Cardiac septum (tissue), 1 donor: ENCODE measurements at regions of chr18 and their contacts with region 1.

Region 1: GRCh38 chr18:59459369-59460079 is 100.5 kb upstream of the LMAN1 start:
- DNase-seq: no peak

Region 2: GRCh38 chr18:59249205-59249774 is 210.2 kb before region 1 on chr18:
- intact Hi-C with region 1: no loop called
- DNase-seq: no peak

Region 3: GRCh38 chr18:59555995-59556659 is 96.6 kb after region 1 on chr18:
- intact Hi-C with region 1: no loop called
- DNase-seq: no peak

Region 4: DNA sequence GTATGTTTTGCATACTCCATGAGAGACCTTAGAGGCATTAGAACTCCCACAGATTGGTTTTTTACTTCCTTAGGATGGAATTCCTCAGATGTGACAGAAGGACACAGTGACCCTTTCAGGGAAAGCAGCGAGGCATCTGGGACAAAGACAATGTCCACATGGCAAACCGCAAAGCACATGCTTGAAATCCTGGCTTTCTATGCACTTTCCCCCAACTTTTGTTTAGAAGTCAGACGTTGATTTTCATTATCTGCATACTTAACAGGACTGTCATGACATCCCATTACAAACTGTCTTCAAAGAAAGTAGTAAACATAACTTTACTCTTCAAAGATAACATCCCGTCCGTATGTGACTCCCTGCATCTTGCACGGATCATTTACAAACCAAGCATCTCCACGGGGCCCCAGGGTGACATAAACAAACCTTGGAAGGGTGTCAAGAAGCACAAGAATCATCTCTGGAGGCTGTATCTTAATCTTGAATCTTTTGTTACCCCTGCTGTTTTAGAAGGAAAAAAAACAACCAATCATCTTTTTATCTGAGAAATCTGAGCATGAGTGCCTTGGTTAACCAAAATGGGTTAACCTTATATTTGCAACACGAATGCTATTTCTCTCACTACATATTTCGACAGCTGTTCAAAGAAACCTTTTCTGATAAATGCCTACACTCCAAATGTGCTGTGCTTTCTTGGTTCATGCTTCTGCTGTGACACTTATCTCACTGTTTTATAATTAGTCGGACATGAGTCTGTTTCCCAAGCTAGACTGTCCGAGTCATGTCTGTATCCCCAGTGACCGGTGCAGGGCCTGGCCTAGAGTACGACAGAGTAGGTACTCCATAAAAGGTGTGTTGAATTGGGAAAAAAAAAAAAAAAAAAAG is 146.9 kb after region 1 on chr18:
- intact Hi-C with region 1: loop called (anchors 10 kb)
- DNase-seq: no peak

Region 5: GRCh38 chr18:59623456-59624368 is 164.2 kb after region 1 on chr18:
- intact Hi-C with region 1: loop called (anchors 10 kb)
- DNase-seq: no peak

Region 6: DNA sequence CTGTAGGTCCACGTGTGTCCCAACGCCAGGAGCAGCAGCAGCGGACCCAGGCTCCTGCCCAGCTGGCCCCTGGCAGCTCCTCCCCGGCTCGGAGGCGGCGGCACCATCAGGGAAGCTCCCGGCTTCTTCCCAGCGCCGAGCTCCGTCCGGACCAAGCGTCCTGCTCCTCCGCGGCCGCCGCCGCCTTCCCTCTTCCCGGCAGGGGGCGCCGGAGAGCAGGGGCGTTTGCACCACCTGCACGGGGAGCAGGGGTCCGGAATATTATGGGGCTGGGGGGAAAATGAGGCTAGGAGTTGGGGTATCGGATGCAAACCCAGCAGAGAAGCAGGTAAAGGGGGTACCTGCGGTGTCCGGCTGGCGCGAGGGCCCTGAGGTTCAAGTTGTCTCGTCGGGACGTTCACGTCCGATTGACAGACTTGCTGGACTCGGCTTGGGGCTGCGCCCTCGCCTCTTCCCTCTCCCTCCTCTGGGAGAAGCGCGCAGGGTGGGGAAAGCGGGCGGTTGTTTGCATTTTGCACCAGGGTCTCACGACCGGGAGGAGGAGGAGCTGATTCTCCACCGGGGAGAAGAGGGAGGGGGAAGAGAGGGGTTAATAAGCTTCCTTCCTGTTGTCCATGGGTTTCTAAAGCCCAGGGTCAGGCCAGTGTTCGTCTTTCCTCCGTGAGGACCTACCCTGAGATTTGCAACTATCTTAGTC is 237.9 kb after region 1 on chr18 and contains the start of gene CCBE1:
- intact Hi-C with region 1: loop called (anchors 5 kb)
- DNase-seq: no peak
- total RNA-seq, gene CCBE1: 0.05 TPM

Region 7: GRCh38 chr18:59715966-59716369 is 256.4 kb after region 1 on chr18:
- intact Hi-C with region 1: no loop called
- DNase-seq: no peak

Region 8: GRCh38 chr18:59823596-59824195 is 364.2 kb after region 1 on chr18:
- intact Hi-C with region 1: loop called (anchors 2 kb)
- DNase-seq: no peak